Activated CD4-positive, alpha-beta T cell treated with anti-CD3 and anti-CD28 coated beads, Interleukin-2, amount 10 ng/mL, durations not matched to agents 24 days and 14 days (primary cell): ENCODE measurements at regions of chrX and their contacts with region 1.

Region 1: GRCh38 chrX:24150051-24150790 is 692 bp downstream of the ZFX start:
- DNase-seq: peak; percentile 93
- H3K4me3 Mint-ChIP-seq: peak overlapping the region; percentile 88
- H3K27ac Mint-ChIP-seq: peak overlapping the region; percentile 89
- H3K4me1 Mint-ChIP-seq: peaks cover 32% of the 10 kb centered on the region
- H3K27me3 Mint-ChIP-seq: no peaks in the 10 kb centered on the region

Region 2: GRCh38 chrX:23732704-23733103 is 417.5 kb before region 1 on chrX:
- intact Hi-C with region 1: loop called (anchors 5 kb)
- DNase-seq: peak; percentile 61
- H3K4me3 Mint-ChIP-seq: peak overlapping the region; percentile 59
- H3K27ac Mint-ChIP-seq: peak overlapping the region; percentile 89
- H3K4me1 Mint-ChIP-seq: peaks cover 20% of the 10 kb centered on the region
- H3K27me3 Mint-ChIP-seq: no peaks in the 10 kb centered on the region

Region 3: DNA sequence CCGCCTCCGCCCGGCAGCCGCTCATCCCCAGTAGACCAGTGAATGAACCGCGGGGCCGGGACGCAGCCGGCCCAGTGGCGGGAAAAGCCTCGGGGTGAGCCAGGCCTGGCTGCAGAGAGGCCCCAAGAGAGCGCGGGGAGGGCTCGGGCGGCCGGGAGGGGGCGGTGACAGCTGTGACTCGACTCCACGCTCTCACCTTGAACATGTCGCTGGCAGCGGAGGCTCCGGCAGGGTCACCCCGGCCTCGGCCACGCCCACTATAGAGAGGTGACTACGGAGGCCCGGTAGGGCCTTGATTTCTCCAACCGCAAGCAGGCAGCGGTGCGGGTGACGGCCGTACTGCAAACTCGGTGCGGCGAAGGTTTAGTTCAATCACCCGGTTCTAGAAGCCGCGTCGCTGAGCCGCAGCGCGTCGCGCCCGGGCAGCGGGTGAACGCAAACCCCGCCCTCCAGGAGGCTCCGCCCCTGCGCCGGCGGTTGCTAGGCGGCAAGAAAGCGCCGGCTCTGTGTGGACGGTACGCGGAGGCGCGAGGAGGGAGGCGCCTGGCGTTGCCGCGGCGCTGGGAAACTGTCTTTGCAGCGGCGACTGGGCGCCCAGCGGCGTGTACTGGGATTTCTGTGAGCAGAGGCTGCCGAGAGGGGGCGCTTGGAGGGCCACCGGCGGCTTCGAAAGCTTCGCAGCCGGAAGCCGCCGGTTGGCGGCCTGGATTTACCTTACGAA is 242.6 kb before region 1 on chrX and contains the starts of genes APOO and CXorf58:
- intact Hi-C with region 1: loop called (anchors 5 kb)
- DNase-seq: peak; percentile 97
- H3K4me3 Mint-ChIP-seq: peak within 1 kb of the TSS; percentile 82
- H3K27ac Mint-ChIP-seq: peak within 1 kb of the TSS; percentile 88
- H3K4me1 Mint-ChIP-seq: peaks cover 17% of the 10 kb centered on the region
- H3K27me3 Mint-ChIP-seq: no peaks in the 10 kb centered on the region
- total RNA-seq, gene APOO: 27.1 and 33.7 TPM in 2 replicates
- total RNA-seq, gene CXorf58: not detected in 2 replicates

Region 4: DNA sequence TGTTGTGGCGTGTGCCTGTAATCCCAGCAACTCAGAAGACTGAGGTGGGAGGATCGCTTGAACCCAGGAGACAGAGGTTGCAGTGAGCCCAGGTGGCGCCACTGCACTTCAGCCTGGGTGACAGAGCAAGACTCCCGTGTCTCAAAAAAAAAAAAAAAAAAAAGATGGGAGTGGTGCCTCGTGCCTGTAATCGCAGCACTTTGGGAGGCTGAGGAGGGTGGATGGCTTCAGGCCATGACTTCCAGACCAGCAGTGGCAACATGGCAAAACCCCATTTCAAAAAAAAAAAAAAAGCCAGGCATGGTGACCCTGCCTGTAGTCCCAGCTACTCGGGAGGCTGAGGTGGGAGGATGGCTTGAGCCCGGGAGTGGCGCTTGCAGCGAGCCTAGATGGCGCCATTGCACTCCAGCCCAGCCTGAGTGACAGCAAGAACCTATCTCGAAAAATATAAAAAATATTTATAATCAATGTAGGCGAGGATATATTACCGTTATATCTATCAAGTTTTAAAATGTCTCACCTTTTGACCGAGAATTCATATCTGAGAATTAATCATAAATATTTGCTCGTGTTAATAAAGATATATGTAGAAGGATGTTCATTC is 68.5 kb before region 1 on chrX:
- intact Hi-C with region 1: loop called (anchors 2 kb)
- DNase-seq: peak; percentile 82
- H3K4me3 Mint-ChIP-seq: peak overlapping the region; percentile 62
- H3K27ac Mint-ChIP-seq: peak overlapping the region; percentile 45
- H3K4me1 Mint-ChIP-seq: peaks cover 10% of the 10 kb centered on the region
- H3K27me3 Mint-ChIP-seq: no peaks in the 10 kb centered on the region

Region 5: GRCh38 chrX:24204331-24204730 is 54.1 kb after region 1 on chrX:
- intact Hi-C with region 1: loop called (anchors 5 kb)
- DNase-seq: no peak
- H3K4me3 Mint-ChIP-seq: no peak overlapping the region
- H3K27ac Mint-ChIP-seq: no peak overlapping the region
- H3K4me1 Mint-ChIP-seq: peaks cover 22% of the 10 kb centered on the region
- H3K27me3 Mint-ChIP-seq: no peaks in the 10 kb centered on the region

Region 6: DNA sequence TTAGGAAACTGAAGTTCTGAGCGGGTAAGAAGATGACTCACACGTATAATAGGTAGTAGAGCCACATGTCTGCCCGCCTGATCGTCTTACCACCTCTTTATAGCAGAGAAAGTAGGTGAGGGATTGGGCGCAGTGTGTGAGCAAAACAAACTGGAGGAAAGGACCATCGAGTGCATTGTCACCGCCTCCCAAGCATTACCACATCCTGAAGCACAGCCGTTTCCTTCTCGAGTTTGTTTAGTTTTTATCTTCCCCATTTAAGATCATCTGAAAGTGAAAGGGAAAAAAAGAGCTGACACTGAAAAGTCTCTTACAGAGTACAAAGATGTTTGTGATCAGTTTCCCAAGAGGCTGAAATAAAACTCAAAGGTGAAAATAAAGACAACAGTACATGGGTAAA is 329.7 kb after region 1 on chrX:
- intact Hi-C with region 1: loop called (anchors 10 kb)
- DNase-seq: peak; percentile 91
- H3K4me3 Mint-ChIP-seq: peak overlapping the region; percentile 66
- H3K27ac Mint-ChIP-seq: peak overlapping the region; percentile 94
- H3K4me1 Mint-ChIP-seq: peaks cover 37% of the 10 kb centered on the region
- H3K27me3 Mint-ChIP-seq: no peaks in the 10 kb centered on the region